Common myeloid progenitor, CD34-positive (primary cell): ENCODE measurements at regions of chr10 and their contacts with region 1.

Region 1: DNA sequence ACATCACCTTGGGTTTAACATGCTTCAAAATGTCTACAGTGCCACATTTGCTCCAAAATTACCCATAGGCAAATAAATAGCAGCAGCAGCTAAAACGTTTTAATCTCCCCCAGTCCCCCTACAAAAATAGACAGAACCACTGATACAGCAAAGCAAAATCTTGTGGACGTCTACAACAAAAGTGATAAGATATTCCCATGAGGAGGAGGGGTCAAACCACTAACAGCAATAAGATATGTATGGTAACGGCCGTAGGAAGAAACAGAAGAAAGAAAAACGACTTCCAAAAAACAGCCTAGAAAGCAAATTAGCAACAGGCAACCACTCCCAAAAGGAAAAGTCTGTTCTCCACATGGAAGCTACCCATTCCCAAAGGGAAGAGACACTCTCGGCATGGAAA is 34.5 kb upstream of the ST8SIA6 start:
- DNase-seq: no peak
- H3K4me3 ChIP-seq: no peak overlapping the region
- H3K27ac ChIP-seq: no peak overlapping the region
- H3K4me1 ChIP-seq: no peaks in the 10 kb centered on the region
- H3K27me3 ChIP-seq: no peaks in the 10 kb centered on the region

Region 2: DNA sequence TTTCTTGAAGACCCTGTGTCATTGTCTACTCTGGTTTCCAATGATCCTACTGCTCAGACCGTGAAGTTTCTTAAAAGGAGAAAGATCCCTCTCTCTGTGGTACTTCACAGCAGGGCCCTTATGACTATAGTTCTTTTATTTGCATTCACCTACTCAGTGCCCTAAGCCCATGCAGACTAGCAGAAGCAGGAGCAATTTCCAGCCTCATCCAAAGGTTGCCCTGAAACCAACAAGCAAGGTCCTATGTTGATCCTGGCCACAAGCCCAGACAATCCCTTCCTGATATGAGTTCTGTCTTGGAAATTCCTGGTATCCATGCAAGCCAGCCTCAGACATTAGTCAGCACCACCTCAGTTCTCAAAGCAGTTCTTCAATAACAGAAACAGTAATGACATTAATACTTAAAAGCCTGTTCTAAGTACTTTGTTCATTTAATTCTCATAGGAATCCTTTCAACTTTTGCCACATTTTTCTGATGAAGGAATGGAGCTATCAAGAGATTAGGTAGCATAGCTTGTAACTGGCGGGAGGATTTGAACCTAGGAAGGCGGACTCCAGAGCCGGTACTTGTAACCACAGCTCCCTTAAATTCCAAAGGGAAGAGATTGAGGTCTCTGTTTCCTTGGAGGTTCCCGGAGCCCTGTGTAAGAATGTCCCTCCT is 23.6 kb after region 1 on chr10:
- CTCF ChIA-PET with region 1: interaction called, 3 read pairs
- POLR2A ChIA-PET with region 1: interaction called, 10 read pairs
- DNase-seq: no peak
- H3K4me3 ChIP-seq: no peak overlapping the region
- H3K27ac ChIP-seq: no peak overlapping the region
- H3K4me1 ChIP-seq: peaks cover 6 to 58% (median 42%) of the 10 kb centered on the region in 4 experiments
- H3K27me3 ChIP-seq: no peaks in the 10 kb centered on the region